ENCODE measurements at regions of chr4 and their contacts with region 1.

Region 1: GRCh38 chr4:10655986-10656385 is 28.6 kb downstream of the CLNK start:
- DNase-seq: no peak
- H3K4me3 Mint-ChIP-seq: peak overlapping the region; percentile 55
- H3K27ac Mint-ChIP-seq: peak overlapping the region; percentile 80
- H3K4me1 Mint-ChIP-seq: peaks cover 32% of the 10 kb centered on the region
- H3K27me3 Mint-ChIP-seq: peaks cover 1% of the 10 kb centered on the region

Region 2: GRCh38 chr4:10461091-10461849 is 194.7 kb before region 1 on chr4:
- intact Hi-C with region 1: loop called (anchors 10 kb)
- DNase-seq: peak; percentile 95
- H3K4me3 Mint-ChIP-seq: peak overlapping the region; percentile 84
- H3K27ac Mint-ChIP-seq: peak overlapping the region; percentile 22
- H3K4me1 Mint-ChIP-seq: peaks cover 30% of the 10 kb centered on the region
- H3K27me3 Mint-ChIP-seq: peaks cover 37% of the 10 kb centered on the region

Region 3: DNA sequence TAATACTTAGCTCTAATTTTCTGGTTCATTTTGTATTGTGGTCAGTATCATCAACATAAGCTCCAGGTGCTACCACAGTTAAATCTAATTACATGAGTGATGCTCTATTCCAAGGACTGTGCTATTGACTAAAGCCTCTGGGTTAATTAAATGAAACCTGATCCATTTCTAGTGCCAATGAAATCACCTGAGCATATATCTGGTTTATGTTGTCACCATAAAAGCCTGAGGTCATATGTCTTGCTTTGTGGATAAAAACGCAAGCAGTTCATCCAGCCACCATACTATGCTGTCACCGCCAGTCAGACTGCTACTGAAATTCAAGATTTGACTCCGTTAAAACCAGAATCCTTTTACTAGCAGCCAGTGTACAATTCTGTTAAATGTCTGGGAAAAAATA is 134.6 kb before region 1 on chr4:
- intact Hi-C with region 1: no loop called
- DNase-seq: no peak
- H3K4me3 Mint-ChIP-seq: no peak overlapping the region
- H3K27ac Mint-ChIP-seq: no peak overlapping the region
- H3K4me1 Mint-ChIP-seq: no peaks in the 10 kb centered on the region
- H3K27me3 Mint-ChIP-seq: peaks cover 4% of the 10 kb centered on the region

Region 4: GRCh38 chr4:10571909-10572308 is 84.1 kb before region 1 on chr4:
- intact Hi-C with region 1: no loop called
- DNase-seq: no peak
- H3K4me3 Mint-ChIP-seq: no peak overlapping the region
- H3K27ac Mint-ChIP-seq: no peak overlapping the region
- H3K4me1 Mint-ChIP-seq: peaks cover 3% of the 10 kb centered on the region
- H3K27me3 Mint-ChIP-seq: peaks cover 13% of the 10 kb centered on the region

Region 5: GRCh38 chr4:10671366-10671765 is 15.4 kb after region 1 on chr4:
- intact Hi-C with region 1: loop called (anchors 1 kb)
- DNase-seq: peak; percentile 87
- H3K4me3 Mint-ChIP-seq: peak overlapping the region; percentile 43
- H3K27ac Mint-ChIP-seq: peak overlapping the region; percentile 85
- H3K4me1 Mint-ChIP-seq: peaks cover 31% of the 10 kb centered on the region
- H3K27me3 Mint-ChIP-seq: no peaks in the 10 kb centered on the region

Region 6: DNA sequence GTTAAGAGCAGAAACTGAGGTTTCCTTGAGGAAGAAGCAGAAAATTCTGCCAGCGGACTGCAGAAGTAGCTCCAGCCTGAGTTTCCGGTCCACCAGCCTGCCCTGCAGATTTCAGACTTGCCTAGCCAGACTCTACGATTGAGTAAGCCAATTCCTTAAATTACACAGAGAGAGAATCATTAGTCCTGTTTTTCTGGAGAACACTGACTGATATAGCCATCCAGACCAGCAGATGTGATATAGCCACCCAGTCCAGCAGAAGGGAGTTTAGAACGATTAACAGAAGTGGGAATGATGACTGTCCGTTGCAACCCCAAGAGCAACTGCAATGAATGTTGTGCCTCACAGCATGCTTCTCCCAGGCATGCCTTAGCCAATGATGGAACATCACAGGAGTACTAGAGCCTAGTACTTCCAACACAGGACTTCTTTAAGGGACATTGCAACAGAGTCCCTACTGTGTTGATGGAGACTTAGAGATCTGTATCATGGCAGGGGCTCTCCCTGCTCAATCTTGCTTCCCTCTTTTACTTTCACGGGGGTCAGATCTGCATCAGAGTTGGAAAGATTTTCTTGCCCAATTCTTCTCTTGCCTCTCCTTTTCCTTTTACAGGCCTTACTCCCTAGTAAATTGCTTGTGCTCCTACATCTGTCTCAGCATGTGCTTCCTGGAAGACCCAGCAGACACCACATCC is 293.2 kb after region 1 on chr4:
- intact Hi-C with region 1: loop called (anchors 2 kb)
- DNase-seq: no peak
- H3K4me3 Mint-ChIP-seq: no peak overlapping the region
- H3K27ac Mint-ChIP-seq: no peak overlapping the region
- H3K4me1 Mint-ChIP-seq: peaks cover 2% of the 10 kb centered on the region
- H3K27me3 Mint-ChIP-seq: peaks cover 9% of the 10 kb centered on the region

Measured in activated CD4-positive, alpha-beta T cell treated with anti-CD3 and anti-CD28 coated beads, Interleukin-2, amount 10 ng/mL, durations not matched to agents 24 days and 14 days (primary cell).